B cell (primary cell): ENCODE measurements at regions of chr10 and their contacts with region 1.

Region 1: GRCh38 chr10:101214446-101215396 is 14.5 kb downstream of the LBX1 start:
- DNase-seq: peak; percentile 83
- ATAC-seq: peak; percentile 78
- H3K4me3 ChIP-seq: peak overlapping the region in 1 of 5 experiments; percentile 53
- H3K4me3 Mint-ChIP-seq: peak overlapping the region; percentile 80
- H3K27ac ChIP-seq: no peak overlapping the region
- H3K27ac Mint-ChIP-seq: no peak overlapping the region
- H3K4me1 ChIP-seq: peaks cover 44 to 48% of the 10 kb centered on the region in 2 donors
- H3K4me1 Mint-ChIP-seq: peaks cover 34% of the 10 kb centered on the region
- H3K27me3 ChIP-seq: peaks cover 0 to 95% (median 68%) of the 10 kb centered on the region in 4 experiments
- H3K27me3 Mint-ChIP-seq: peaks cover 67% of the 10 kb centered on the region
- CTCF ChIP-seq: peak; percentile 87

Region 2: GRCh38 chr10:101228153-101228973 is 13.6 kb after region 1 on chr10:
- CTCF ChIA-PET with region 1: interaction called, 19 read pairs
- POLR2A ChIA-PET with region 1: no interaction called
- intact Hi-C with region 1: loop called (anchors 1 kb)
- DNase-seq: no peak
- ATAC-seq: no peak
- H3K4me3 ChIP-seq: no peak overlapping the region
- H3K4me3 Mint-ChIP-seq: peak overlapping the region; percentile 73
- H3K27ac ChIP-seq: no peak overlapping the region
- H3K27ac Mint-ChIP-seq: peak overlapping the region; percentile 46
- H3K4me1 ChIP-seq: peaks cover 53 to 79% of the 10 kb centered on the region in 2 donors
- H3K4me1 Mint-ChIP-seq: peaks cover 41% of the 10 kb centered on the region
- H3K27me3 ChIP-seq: peaks cover 0 to 90% (median 77%) of the 10 kb centered on the region in 4 experiments
- H3K27me3 Mint-ChIP-seq: peaks cover 65% of the 10 kb centered on the region
- CTCF ChIP-seq: no peak

Region 3: DNA sequence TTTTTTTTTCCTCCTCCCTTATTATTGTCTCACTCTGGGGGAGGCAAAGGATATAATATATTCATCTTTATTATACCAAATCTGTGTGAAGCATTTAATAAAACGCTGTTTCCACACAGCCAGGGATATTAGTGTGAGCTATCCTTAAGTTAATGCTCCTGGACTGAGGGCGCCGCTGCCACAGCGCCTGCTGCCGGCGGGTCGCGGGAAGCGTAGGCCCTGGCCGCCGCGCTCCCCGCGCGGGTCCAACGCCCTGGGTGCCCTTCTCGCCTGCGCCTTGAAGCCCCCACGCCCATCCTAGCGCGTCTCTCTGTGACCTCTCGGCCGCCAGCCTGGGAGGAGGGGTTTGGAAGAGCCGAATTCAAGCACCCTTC is 24.0 kb after region 1 on chr10:
- CTCF ChIA-PET with region 1: interaction called, 11 read pairs
- POLR2A ChIA-PET with region 1: no interaction called
- intact Hi-C with region 1: loop called (anchors 2 kb)
- DNase-seq: peak; percentile 46
- ATAC-seq: no peak
- H3K4me3 ChIP-seq: no peak overlapping the region
- H3K4me3 Mint-ChIP-seq: no peak overlapping the region
- H3K27ac ChIP-seq: no peak overlapping the region
- H3K27ac Mint-ChIP-seq: no peak overlapping the region
- H3K4me1 ChIP-seq: peaks cover 21 to 32% of the 10 kb centered on the region in 2 donors
- H3K4me1 Mint-ChIP-seq: peaks cover 12% of the 10 kb centered on the region
- H3K27me3 ChIP-seq: peaks cover 0 to 72% (median 62%) of the 10 kb centered on the region in 4 experiments
- H3K27me3 Mint-ChIP-seq: peaks cover 77% of the 10 kb centered on the region
- CTCF ChIP-seq: peak; percentile 58

Region 4: GRCh38 chr10:101291331-101292193 is 76.8 kb after region 1 on chr10:
- CTCF ChIA-PET with region 1: interaction called, 48 read pairs
- POLR2A ChIA-PET with region 1: no interaction called
- intact Hi-C with region 1: loop called (anchors 1 kb)
- DNase-seq: peak; percentile 68
- ATAC-seq: peak; percentile 69
- H3K4me3 ChIP-seq: peak overlapping the region in 4 of 5 experiments; percentile 24 to 63 (median 44)
- H3K4me3 Mint-ChIP-seq: peak overlapping the region; percentile 83
- H3K27ac ChIP-seq: no peak overlapping the region
- H3K27ac Mint-ChIP-seq: no peak overlapping the region
- H3K4me1 ChIP-seq: peaks cover 21 to 35% of the 10 kb centered on the region in 2 donors
- H3K4me1 Mint-ChIP-seq: peaks cover 18% of the 10 kb centered on the region
- H3K27me3 ChIP-seq: peaks cover 2 to 80% (median 49%) of the 10 kb centered on the region in 4 experiments
- H3K27me3 Mint-ChIP-seq: peaks cover 64% of the 10 kb centered on the region
- CTCF ChIP-seq: peak; percentile 73

Region 5: DNA sequence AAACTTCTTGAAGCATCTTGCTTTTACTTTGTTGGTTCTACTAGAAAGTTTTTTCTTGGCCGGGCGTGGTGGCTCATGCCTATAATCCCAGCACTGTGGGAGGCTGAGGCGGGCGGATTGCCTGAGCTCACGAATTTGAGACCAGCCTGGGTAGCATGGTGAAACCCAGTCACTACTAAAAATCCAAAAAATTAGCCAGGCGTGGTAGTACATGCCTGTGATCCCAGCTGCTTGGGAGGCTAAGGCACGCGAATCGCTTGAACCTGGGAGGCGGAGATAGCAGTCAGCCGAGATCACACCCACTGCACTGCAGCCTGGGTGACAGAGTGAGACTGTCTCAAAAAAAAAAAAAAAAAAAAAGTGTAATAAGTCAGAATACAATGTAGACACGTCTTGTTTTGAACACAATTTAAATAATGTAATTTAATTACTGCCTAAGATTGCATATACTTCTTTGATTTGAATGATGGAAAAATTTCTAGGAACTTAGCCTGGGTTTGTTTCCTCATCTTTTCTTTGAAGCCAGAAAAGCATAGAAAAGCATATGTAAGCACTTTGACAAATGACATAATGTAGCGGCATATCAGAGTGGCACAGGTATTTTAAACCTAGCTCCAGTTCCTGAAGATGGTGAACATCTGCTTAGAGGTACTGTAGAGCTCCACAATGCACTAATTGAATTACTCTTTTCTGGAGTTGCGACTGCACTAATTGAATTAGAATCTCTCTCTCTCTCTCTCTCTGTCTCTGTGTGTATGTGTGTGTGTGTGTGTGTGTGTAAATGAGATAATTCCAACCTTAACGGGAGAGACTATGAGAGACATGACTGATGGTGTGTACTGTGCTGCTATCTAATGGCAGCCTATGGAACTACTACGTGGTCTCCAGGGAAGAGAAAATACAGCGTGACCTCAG is 227.1 kb after region 1 on chr10:
- CTCF ChIA-PET with region 1: interaction called, 23 read pairs
- POLR2A ChIA-PET with region 1: no interaction called
- intact Hi-C with region 1: no loop called
- DNase-seq: peak; percentile 50
- ATAC-seq: peak; percentile 71
- H3K4me3 ChIP-seq: no peak overlapping the region
- H3K4me3 Mint-ChIP-seq: no peak overlapping the region
- H3K27ac ChIP-seq: no peak overlapping the region
- H3K27ac Mint-ChIP-seq: no peak overlapping the region
- H3K4me1 ChIP-seq: no peaks in the 10 kb centered on the region
- H3K4me1 Mint-ChIP-seq: peaks cover 1% of the 10 kb centered on the region
- H3K27me3 ChIP-seq: no peaks in the 10 kb centered on the region
- H3K27me3 Mint-ChIP-seq: no peaks in the 10 kb centered on the region
- CTCF ChIP-seq: peak; percentile 50

Region 6: GRCh38 chr10:101467286-101467770 is 252.6 kb after region 1 on chr10:
- CTCF ChIA-PET with region 1: interaction called, 45 read pairs
- POLR2A ChIA-PET with region 1: no interaction called
- intact Hi-C with region 1: loop called (anchors 1 kb)
- DNase-seq: peak; percentile 70
- ATAC-seq: peak; percentile 61
- H3K4me3 ChIP-seq: no peak overlapping the region
- H3K4me3 Mint-ChIP-seq: no peak overlapping the region
- H3K27ac ChIP-seq: no peak overlapping the region
- H3K27ac Mint-ChIP-seq: no peak overlapping the region
- H3K4me1 ChIP-seq: no peaks in the 10 kb centered on the region
- H3K4me1 Mint-ChIP-seq: peaks cover 8% of the 10 kb centered on the region
- H3K27me3 ChIP-seq: no peaks in the 10 kb centered on the region
- H3K27me3 Mint-ChIP-seq: no peaks in the 10 kb centered on the region
- CTCF ChIP-seq: peak; percentile 93

Region 7: GRCh38 chr10:101569838-101570766 is 355.4 kb after region 1 on chr10:
- CTCF ChIA-PET with region 1: interaction called, 47 read pairs
- POLR2A ChIA-PET with region 1: no interaction called
- intact Hi-C with region 1: loop called (anchors 1 kb)
- DNase-seq: peak; percentile 89
- ATAC-seq: peak; percentile 88
- H3K4me3 ChIP-seq: peak overlapping the region; percentile 42 to 69 (median 64)
- H3K4me3 Mint-ChIP-seq: peak overlapping the region; percentile 86
- H3K27ac ChIP-seq: no peak overlapping the region
- H3K27ac Mint-ChIP-seq: peak overlapping the region; percentile 32
- H3K4me1 ChIP-seq: peaks cover 21 to 28% of the 10 kb centered on the region in 2 donors
- H3K4me1 Mint-ChIP-seq: peaks cover 17% of the 10 kb centered on the region
- H3K27me3 ChIP-seq: peaks cover 0 to 47% (median 33%) of the 10 kb centered on the region in 4 experiments
- H3K27me3 Mint-ChIP-seq: peaks cover 39% of the 10 kb centered on the region
- CTCF ChIP-seq: peak; percentile 85